A549 (cell line): ENCODE measurements at regions of chr1 and their contacts with region 1.

Region 1: GRCh38 chr1:222634180-222635013 is 16.5 kb downstream of the MIA3 start:
- DNase-seq: peak; percentile 71 to 89
- ATAC-seq: peak; percentile 87 to 95
- H3K4me3 ChIP-seq: no peak overlapping the region
- H3K27ac ChIP-seq: no peak overlapping the region
- H3K4me1 ChIP-seq: no peaks in the 10 kb centered on the region
- CTCF ChIP-seq: peak; percentile 93
- EP300 ChIP-seq: no peak
- POLR2A ChIP-seq: no peak
- RAD21 ChIP-seq: peak; percentile 81

Region 2: DNA sequence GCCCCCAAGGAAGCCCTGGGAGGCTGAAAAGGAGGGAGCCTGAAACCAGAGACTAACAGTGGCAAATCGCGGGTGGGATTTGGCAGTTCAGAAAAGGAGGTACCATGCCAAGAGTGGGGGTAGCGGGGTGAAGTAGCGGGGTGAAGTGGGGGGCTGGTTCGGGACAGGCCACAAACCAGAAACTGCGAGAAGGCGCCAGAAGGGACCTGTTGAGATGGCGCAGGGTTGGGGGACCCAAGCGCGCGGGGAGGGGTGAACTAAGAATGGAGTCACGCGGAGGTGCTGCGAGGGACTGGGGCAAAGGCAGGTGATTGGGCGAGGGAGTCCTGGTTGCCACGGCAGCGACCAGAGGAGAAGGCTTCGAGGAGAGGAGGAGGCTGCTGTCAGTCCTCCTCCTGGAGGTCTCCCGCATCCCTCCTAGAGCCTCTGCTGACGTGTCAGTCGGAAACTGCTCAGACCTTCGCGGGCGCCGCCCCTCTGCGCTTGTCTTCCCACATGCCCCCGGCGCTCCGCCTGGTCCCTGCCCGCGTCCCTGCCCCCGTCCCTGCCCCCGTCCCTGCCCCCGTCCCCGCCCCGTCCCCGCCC is 16.9 kb before region 1 on chr1:
- CTCF ChIA-PET with region 1: interaction called, 35 read pairs
- POLR2A ChIA-PET with region 1: no interaction called
- DNase-seq: peak; percentile 77 to 90
- ATAC-seq: peak; percentile 95
- H3K4me3 ChIP-seq: peak overlapping the region; percentile 59
- H3K27ac ChIP-seq: peak overlapping the region; percentile 64 to 84; a peak in 5 of 6 replicates
- H3K4me1 ChIP-seq: peaks cover 8% of the 10 kb centered on the region; the same call in 2 of the 3 replicates
- CTCF ChIP-seq: no peak
- EP300 ChIP-seq: no peak
- POLR2A ChIP-seq: no peak
- RAD21 ChIP-seq: no peak